ENCODE measurements at regions of chr4 and their contacts with region 1.

Region 1: GRCh38 chr4:122617597-122618593 is 3.0 kb downstream of the IL21 start:
- DNase-seq: no peak
- H3K4me3 Mint-ChIP-seq: peak overlapping the region; percentile 88
- H3K27ac Mint-ChIP-seq: peak overlapping the region; percentile 97
- H3K4me1 Mint-ChIP-seq: peaks cover 70% of the 10 kb centered on the region
- H3K27me3 Mint-ChIP-seq: no peaks in the 10 kb centered on the region

Region 2: DNA sequence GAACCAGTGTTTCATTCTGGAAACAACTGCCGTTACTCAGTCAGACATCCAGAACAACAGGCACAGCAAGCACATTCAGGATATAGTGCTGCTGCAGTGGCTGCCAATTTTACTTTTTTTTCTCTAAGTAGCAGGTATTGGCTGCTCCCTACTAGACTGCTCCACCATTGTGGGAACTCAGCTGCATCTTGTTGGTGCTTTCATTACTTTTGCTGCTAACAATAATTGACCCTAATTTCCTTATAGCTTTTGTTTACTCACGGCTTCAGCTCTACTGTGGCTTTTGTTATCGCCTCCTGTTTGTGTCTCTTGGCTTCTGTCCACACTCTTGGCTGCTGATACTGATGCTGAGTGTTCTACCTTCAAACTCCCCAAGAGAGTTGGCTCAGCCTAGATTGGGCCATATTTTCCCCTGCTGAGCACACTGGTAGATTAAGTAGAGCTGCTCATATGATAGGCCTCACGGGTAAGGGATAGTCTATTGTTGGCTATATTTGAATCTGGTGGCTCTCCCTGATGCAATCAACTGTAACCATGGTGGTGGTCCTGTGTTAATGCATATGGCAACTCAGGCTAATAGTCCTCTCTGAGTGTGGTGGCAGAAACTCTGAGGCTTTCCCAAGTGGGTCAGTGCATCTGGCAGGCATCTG is 116.9 kb before region 1 on chr4:
- CTCF ChIA-PET with region 1: no interaction called
- intact Hi-C with region 1: no loop called
- DNase-seq: no peak
- H3K4me3 Mint-ChIP-seq: no peak overlapping the region
- H3K27ac Mint-ChIP-seq: no peak overlapping the region
- H3K4me1 Mint-ChIP-seq: peaks cover 38% of the 10 kb centered on the region
- H3K27me3 Mint-ChIP-seq: no peaks in the 10 kb centered on the region

Region 3: DNA sequence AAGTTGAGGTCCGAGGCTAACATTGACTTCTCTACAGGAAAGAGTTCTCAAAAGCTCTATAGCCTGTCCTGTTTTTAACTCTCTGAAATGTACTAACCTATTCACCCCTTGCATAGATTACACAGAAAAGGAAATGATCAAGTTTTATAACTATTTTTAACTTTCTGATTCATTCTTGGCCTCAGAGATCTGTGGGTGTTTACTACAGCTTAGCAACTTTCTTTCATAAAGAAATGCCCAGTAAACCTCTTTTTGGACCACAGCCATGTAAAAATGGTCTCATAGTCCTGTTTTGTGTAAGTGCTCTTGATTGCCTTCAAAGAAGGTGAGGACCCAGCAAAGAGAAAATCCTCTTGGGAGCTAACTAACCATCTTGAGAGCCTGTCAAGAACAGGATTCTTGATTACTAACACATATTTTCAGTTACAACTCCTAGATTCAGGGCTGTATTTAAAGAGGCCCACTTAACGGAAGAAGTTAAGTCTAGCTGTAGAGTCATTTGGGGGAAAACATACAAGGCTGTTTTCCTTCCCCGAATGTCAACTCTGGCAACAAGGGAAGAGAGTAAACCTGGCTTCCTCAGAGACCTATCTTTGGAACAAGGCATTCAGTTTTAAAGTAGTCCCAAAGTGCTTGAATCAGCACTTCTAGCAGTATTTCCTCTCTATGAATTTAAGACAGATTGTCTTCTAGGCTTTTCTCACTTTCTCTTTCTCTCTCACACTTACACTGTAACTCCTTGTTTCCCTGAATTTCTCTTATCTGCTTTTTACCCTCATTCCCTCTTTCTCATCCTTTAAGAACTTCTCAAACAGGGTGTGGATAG is 75.3 kb before region 1 on chr4:
- CTCF ChIA-PET with region 1: no interaction called
- intact Hi-C with region 1: loop called (anchors 1 kb)
- DNase-seq: no peak
- H3K4me3 Mint-ChIP-seq: peak overlapping the region; percentile 52
- H3K27ac Mint-ChIP-seq: peak overlapping the region; percentile 100
- H3K4me1 Mint-ChIP-seq: peaks cover 94% of the 10 kb centered on the region
- H3K27me3 Mint-ChIP-seq: no peaks in the 10 kb centered on the region

Region 4: GRCh38 chr4:122632396-122633143 is 14.7 kb after region 1 on chr4:
- CTCF ChIA-PET with region 1: interaction called, 8 read pairs
- intact Hi-C with region 1: loop called (anchors 1 kb)
- DNase-seq: no peak
- H3K4me3 Mint-ChIP-seq: no peak overlapping the region
- H3K27ac Mint-ChIP-seq: no peak overlapping the region
- H3K4me1 Mint-ChIP-seq: peaks cover 45% of the 10 kb centered on the region
- H3K27me3 Mint-ChIP-seq: peaks cover 2% of the 10 kb centered on the region

Region 5: GRCh38 chr4:122700178-122700725 is 82.4 kb after region 1 on chr4:
- CTCF ChIA-PET with region 1: no interaction called
- intact Hi-C with region 1: loop called (anchors 1 kb)
- DNase-seq: no peak
- H3K4me3 Mint-ChIP-seq: peak overlapping the region; percentile 69
- H3K27ac Mint-ChIP-seq: peak overlapping the region; percentile 99
- H3K4me1 Mint-ChIP-seq: peaks cover 56% of the 10 kb centered on the region
- H3K27me3 Mint-ChIP-seq: peaks cover 4% of the 10 kb centered on the region

Measured in activated naive CD4-positive, alpha-beta T cell treated with anti-CD3 and anti-CD28 coated beads for 36 hours (primary cell).